Ascending aorta (tissue), 2 donors: ENCODE measurements at regions of chr10 and their contacts with region 1.

Region 1: DNA sequence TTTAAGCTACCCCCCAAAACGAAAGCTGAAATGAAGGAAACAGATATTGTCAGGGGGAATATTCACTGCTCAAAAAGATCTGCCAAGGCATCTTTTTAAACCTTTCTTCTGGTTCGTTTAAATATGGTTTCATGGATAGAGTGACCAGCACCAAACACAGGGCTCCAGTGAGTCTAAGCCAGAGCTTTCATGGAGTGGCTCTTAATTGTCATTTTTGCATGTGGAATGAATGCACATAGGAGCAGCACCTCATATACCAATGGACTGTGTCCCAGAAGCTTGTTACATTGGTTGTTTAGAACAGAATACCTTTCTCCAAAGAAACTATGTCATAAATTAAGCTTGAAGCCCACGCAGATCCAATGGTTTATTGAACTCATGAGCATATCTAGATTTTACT is 17.3 kb downstream of the MKX start:
- DNase-seq: no peak
- H3K4me3 ChIP-seq: peak overlapping the region; percentile 23 to 43
- H3K27ac ChIP-seq: peak overlapping the region; percentile 83 to 84
- H3K4me1 ChIP-seq: peaks cover 5 to 27% of the 10 kb centered on the region in 2 donors
- H3K27me3 ChIP-seq: no peaks in the 10 kb centered on the region
- CTCF ChIP-seq: no peak

Region 2: GRCh38 chr10:27169849-27170248 is 558.5 kb before region 1 on chr10:
- intact Hi-C with region 1: no loop called
- DNase-seq: no peak
- H3K4me3 ChIP-seq: no peak overlapping the region
- H3K27ac ChIP-seq: no peak overlapping the region
- H3K4me1 ChIP-seq: no peaks in the 10 kb centered on the region
- H3K27me3 ChIP-seq: no peaks in the 10 kb centered on the region
- CTCF ChIP-seq: no peak

Region 3: GRCh38 chr10:27692663-27693062 is 35.7 kb before region 1 on chr10:
- intact Hi-C with region 1: loop called (anchors 5 kb)
- DNase-seq: no peak
- H3K4me3 ChIP-seq: no peak overlapping the region
- H3K27ac ChIP-seq: peak overlapping the region; percentile 31 to 54
- H3K4me1 ChIP-seq: peaks cover 0 to 38% of the 10 kb centered on the region in 2 donors
- H3K27me3 ChIP-seq: no peaks in the 10 kb centered on the region
- CTCF ChIP-seq: no peak